Dorsolateral prefrontal cortex (tissue), 120 donors: ENCODE measurements at regions of chr6 and their contacts with region 1.

Region 1: GRCh38 chr6:32244946-32245398 is 21.1 kb upstream of the NOTCH4 start:
- DNase-seq: peak; percentile 65 to 88 (median 76)
- H3K4me3 ChIP-seq: peak overlapping the region in 36 of 59 donors; percentile 5 to 46 (median 30)
- H3K27ac ChIP-seq: peak overlapping the region in 11 of 59 donors; percentile 3 to 65 (median 30)
- H3K27me3 ChIP-seq: no peaks in the 10 kb centered on the region
- CTCF ChIP-seq: peak; percentile 79 to 98 (median 94)

Region 2: DNA sequence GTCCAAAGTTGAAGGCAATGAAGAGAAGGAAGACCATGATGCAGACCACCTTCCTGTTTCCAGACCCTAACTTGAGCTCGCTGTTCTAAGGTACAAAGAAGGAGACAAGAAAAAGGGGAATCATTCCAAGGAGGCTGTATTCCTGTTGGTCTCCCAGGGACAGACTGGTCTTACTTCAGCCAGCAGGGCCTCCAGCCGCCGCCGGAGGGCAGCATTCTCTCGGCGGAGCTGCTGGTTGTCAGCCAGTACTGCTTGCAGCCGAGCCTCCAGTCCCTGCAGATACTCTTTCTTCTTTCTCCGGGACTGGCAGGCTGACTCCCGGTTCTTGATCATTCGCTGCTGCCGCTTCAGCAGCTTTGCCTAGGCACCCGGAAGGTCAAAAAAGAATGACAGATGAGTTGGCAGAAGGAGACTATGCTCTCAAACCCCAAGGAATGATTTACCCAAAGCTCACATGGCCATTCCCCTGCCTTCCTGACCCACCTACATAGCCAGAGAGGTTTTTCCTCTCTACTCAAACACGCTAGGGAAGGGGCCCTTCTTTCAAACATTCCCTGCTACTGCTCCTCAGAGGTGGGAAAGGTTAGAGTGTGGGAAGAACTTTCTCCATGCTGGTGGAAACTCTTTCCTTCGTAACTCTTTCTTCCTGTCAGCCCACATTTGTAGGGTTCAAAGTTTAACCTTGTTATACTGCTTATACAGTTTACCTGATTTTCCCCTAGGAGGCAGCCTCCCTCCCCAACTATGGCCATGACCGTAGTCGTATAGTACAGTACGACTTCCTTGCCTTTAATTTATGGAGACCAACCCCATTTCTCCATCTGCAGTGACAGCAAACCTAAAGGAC is 126.0 kb before region 1 on chr6:
- intact Hi-C with region 1: loop called in 1 of 2 experiments (anchors 5 kb)
- DNase-seq: peak; percentile 84 to 95 (median 92)
- H3K4me3 ChIP-seq: peak overlapping the region in 14 of 59 donors; percentile 1 to 25 (median 4)
- H3K27ac ChIP-seq: peak overlapping the region in 54 of 59 donors; percentile 6 to 88 (median 68)
- H3K27me3 ChIP-seq: no peaks in the 10 kb centered on the region
- CTCF ChIP-seq: peak; percentile 75 to 99 (median 94)

Region 3: GRCh38 chr6:32267035-32267434 is 22.1 kb after region 1 on chr6:
- intact Hi-C with region 1: no loop called
- DNase-seq: no peak
- H3K4me3 ChIP-seq: no peak overlapping the region
- H3K27ac ChIP-seq: no peak overlapping the region
- H3K27me3 ChIP-seq: no peaks in the 10 kb centered on the region
- CTCF ChIP-seq: no peak

Region 4: GRCh38 chr6:32885698-32886286 is 640.8 kb after region 1 on chr6:
- intact Hi-C with region 1: no loop called
- DNase-seq: no peak
- H3K4me3 ChIP-seq: peak overlapping the region in 1 of 59 donors; percentile 1
- H3K27ac ChIP-seq: peak overlapping the region in 5 of 59 donors; percentile 10 to 63 (median 47)
- H3K27me3 ChIP-seq: no peaks in the 10 kb centered on the region
- CTCF ChIP-seq: peak; percentile 61 to 90 (median 79)